Mammary epithelial cell (primary cell): ENCODE measurements at regions of chr11 and their contacts with region 1.

Region 1: DNA sequence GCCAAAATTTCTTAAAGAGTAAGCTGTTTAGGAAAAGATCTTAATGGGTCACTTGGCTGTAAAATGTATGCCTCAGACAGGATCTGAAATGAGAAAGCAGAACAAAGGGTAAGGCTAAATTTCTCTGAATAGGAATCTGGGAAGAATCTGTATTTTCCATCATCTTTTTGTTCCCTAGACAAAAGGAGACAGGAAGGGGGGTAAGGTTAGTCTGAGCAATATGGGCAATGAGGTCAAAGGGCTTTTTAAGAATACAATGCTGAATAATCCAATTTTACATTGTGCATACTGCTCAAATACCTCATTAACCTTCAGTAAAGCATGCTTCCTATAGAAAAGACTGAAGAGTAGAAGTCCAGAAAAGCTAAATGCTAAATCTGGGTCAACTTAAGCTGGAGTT is 34.6 kb downstream of the CLDN25 start:
- DNase-seq: no peak
- H3K4me3 ChIP-seq: no peak overlapping the region
- H3K27ac ChIP-seq: no peak overlapping the region
- H3K4me1 ChIP-seq: peaks cover 5% of the 10 kb centered on the region
- H3K27me3 ChIP-seq: no peaks in the 10 kb centered on the region
- CTCF ChIP-seq: no peak

Region 2: GRCh38 chr11:113675003-113675561 is 139.1 kb before region 1 on chr11:
- CTCF ChIA-PET with region 1: no interaction called
- dilution Hi-C with region 1: no loop called
- in situ Hi-C with region 1: no loop called
- intact Hi-C with region 1: no loop called
- DNase-seq: peak; percentile 92
- H3K4me3 ChIP-seq: no peak overlapping the region
- H3K27ac ChIP-seq: no peak overlapping the region
- H3K4me1 ChIP-seq: peaks cover 22% of the 10 kb centered on the region
- H3K27me3 ChIP-seq: no peaks in the 10 kb centered on the region
- CTCF ChIP-seq: no peak

Region 3: DNA sequence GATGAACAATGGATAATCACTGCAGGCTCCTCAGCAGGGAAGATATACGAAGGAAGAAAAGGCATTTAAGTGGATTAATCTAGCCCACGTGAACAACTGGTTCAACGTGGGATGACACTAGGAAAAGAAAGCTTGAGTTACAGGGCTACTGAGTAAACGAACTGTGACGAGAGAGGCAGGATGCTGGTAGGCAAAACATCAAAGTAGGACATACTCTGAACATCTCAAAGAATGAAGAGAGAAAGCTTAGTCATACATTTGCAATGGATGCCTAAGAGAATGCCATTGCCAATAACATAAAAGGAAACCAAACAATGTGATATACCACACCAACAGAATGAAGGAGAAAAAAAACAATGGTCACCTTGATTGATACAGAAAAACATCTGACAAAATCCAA is 48.3 kb after region 1 on chr11:
- CTCF ChIA-PET with region 1: no interaction called
- dilution Hi-C with region 1: loop called (anchors 5 kb)
- in situ Hi-C with region 1: no loop called
- intact Hi-C with region 1: no loop called
- DNase-seq: peak; percentile 15
- H3K4me3 ChIP-seq: no peak overlapping the region
- H3K27ac ChIP-seq: no peak overlapping the region
- H3K4me1 ChIP-seq: peaks cover 18% of the 10 kb centered on the region
- H3K27me3 ChIP-seq: no peaks in the 10 kb centered on the region
- CTCF ChIP-seq: no peak

Region 4: DNA sequence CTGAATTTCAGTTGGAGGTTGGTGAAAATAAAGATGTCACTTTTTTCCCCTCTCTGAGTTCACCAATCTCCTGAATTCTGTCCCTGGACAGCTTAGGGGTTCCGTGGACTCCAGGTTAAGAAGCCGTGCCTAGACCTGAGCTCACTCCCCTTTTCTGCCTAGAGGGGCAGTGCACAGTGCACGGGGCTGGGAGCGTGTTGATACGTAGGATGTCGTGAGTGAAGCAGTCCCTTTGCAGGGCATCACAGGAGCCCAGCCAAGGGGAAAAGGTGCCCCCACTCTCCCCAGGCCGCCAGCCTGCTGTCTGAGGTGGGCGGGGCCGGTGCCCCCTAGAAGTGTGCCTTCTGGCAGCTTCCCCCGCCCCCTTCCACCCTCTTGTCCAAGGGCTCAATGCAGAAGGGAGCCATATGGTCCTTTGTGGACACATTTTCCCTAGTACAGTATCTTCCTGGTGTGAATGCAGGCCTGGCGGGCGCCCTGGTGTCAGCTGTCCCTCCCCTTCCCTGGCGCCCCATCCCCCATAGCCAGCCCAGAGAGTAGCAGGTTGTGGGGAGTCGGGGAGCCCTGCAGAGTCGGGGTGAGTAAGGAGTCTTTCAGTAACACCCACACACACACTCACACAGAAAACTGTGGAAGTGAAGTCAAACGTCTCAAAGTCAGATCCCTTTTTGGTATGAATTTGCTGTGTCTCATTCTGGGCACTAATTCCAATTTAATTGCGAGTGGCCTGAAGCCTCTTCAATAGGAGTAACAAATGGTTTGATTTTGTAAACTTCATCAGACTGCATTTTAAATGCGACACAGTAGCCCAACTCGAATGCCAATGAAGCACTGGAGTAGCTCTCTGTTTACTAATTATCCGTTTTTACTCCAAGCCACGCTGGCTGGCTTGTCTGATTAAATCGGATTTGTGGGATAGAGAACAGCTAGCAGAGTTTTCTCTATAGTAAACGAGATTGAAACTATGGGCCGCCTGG is 414.5 kb after region 1 on chr11:
- CTCF ChIA-PET with region 1: no interaction called
- dilution Hi-C with region 1: no loop called
- in situ Hi-C with region 1: no loop called
- intact Hi-C with region 1: no loop called
- DNase-seq: no peak
- H3K4me3 ChIP-seq: no peak overlapping the region
- H3K27ac ChIP-seq: no peak overlapping the region
- H3K4me1 ChIP-seq: no peaks in the 10 kb centered on the region
- H3K27me3 ChIP-seq: peaks cover 4% of the 10 kb centered on the region
- CTCF ChIP-seq: no peak